Right ventricle myocardium superior (tissue), 1 donor: ENCODE measurements at regions of chr11 and their contacts with region 1.

Region 1: GRCh38 chr11:113305440-113306336 is 8.7 kb upstream of the TTC12 start:
- DNase-seq: peak; percentile 87
- ATAC-seq: peak; percentile 90

Region 2: DNA sequence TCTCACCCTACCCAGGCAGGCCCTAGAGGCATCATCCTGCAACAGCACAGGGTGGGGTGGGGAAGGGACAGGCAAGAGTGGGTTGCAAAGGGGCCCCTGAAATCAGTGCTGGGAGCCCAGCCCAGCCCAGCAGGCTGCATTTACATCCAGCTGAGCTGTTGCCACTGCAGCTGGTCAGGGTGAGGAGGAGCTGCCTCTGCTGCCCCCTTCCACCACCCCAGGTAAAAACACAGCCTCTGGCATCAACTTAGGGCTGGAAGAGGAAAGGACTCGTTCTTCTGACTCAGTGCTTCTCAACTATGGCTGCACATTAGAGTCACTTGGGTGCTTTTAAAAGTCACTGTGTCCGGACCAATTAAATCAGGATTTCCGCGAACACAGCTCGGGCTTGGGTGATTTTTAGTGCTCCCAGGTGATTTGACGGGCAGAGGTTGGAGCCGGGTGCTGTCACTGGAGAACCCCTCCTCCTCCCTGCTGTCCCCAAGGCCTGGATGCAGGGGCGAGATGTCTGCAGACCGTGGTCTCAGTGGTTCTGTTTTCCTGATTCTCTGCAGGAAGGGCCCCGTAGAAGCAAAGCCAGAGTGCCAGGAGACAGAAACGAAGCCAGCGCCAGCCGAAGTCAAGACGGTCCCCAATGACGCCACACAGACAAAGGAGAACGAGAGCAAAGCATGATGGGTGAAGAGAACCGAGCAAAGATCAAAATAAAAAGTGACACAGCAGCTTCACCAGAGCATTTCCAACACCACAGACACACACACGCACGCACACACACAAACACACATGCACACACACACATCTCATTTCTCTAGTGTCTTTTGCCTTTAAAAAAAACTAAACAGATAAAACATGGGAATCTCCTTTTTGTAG is 30.7 kb before region 1 on chr11:
- intact Hi-C with region 1: no loop called
- DNase-seq: no peak
- ATAC-seq: peak; percentile 32

Region 3: GRCh38 chr11:113532697-113533424 is 227.2 kb after region 1 on chr11:
- intact Hi-C with region 1: loop called (anchors 2 kb)
- DNase-seq: peak; percentile 83
- ATAC-seq: peak; percentile 93

Region 4: DNA sequence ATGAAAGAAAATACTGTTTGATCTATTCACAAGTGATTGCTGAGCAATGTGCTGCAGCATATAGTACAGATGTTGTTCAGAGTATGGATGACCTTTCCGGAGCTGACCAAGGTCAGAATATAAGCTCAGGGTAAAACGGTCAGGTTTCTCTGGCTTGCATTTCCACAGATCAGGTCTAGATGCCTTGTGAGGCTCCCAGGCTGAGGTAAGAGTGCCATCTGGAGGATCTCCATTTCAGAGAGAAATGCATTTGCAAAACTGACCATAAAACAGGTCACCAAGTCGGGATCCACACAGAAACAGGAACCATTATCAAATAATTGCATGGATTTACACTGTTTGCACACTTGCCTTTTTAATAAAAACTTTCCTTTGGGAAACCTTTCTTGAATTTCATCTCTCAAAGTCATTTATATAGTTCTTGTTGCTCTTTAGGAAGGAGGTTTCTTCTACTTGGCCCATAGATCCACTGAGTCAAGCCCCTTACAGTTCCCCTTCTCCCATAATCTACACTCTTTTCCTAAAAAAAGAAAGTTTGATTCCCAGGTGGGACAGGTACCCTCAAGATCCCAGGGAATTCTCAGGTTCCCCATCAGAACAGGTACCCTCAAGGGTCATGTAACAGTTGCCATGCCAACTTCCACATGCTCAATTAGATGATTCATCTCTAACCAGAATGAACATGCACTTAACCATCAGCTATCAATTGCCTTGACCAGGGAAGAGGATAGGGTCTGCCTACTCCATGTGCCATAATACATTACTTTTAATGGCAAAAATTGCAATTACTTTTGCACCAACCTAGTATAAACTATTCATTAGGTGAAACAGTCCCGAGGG is 425.4 kb after region 1 on chr11:
- intact Hi-C with region 1: loop called (anchors 1 kb)
- DNase-seq: no peak
- ATAC-seq: peak; percentile 53